ENCODE measurements at regions of chr18 and their contacts with region 1.

Region 1: DNA sequence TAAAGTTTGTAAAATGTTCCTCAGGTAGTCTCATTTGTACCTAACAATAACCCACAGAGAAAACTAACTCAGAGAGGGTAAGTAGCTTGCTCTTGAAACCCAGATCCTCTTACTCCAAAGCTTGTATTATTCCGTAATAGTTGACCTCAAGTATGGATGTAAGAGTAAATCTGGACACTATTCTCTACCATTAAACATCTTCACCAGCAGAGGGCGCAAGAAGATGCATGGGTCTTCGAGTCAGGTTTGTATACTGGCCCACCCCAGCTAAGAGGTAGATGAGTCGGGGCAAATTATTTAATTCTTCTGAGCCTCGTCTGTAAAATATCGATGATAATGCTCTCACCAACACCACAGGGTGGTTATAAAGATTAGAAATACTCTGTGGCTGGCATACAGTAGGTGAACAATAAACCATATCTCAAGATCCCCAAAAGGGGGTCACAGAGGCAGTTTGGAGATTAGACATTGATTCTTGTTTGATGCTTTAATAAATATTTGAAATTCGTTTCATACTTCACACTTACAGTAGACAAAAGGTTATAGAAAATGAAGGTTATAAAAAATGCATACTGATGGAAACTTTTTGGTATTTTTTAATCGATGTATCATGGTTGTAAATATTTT is 3.5 kb upstream of the CABLES1 start:
- DNase-seq: peak; percentile 85
- ATAC-seq: no peak
- H3K4me3 ChIP-seq: no peak overlapping the region
- H3K27ac ChIP-seq: no peak overlapping the region
- H3K4me1 ChIP-seq: peaks cover 20% of the 10 kb centered on the region
- H3K27me3 ChIP-seq: no peaks in the 10 kb centered on the region
- CTCF ChIP-seq: peak; percentile 91

Region 2: DNA sequence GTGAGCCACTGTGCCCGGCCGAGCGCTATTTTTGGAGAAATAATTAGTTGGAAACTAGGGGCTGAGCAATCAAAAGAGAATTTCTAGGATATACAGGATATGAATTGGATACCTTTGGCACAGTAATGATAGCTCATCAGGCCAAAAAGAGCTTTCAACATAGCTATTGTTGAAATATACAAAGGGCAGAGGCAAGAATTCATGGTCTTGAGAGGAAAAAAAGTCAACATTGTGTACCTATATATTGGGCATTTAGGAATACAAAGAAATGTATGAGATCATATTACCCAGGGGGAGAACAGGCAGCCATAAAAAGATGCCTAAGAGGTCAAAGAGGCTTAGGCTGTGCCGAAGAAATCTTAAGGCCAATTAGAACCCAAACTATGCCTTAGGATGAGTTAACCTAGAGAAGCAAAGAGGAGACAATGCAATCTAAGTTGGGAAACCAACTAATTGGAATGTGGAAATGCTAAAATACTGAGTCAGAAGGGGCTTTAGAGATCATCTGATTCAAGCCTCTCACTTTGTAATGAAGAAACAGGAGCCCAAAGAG is 99.7 kb before region 1 on chr18:
- CTCF ChIA-PET with region 1: interaction called, 3 read pairs
- POLR2A ChIA-PET with region 1: interaction called, 3 read pairs
- intact Hi-C with region 1: loop called (anchors 5 kb)
- DNase-seq: peak; percentile 52
- ATAC-seq: no peak; the same call in 1 of the 2 replicates
- H3K4me3 ChIP-seq: no peak overlapping the region
- H3K27ac ChIP-seq: peak overlapping the region; percentile 23
- H3K4me1 ChIP-seq: peaks cover 17% of the 10 kb centered on the region
- H3K27me3 ChIP-seq: no peaks in the 10 kb centered on the region
- CTCF ChIP-seq: no peak

Region 3: DNA sequence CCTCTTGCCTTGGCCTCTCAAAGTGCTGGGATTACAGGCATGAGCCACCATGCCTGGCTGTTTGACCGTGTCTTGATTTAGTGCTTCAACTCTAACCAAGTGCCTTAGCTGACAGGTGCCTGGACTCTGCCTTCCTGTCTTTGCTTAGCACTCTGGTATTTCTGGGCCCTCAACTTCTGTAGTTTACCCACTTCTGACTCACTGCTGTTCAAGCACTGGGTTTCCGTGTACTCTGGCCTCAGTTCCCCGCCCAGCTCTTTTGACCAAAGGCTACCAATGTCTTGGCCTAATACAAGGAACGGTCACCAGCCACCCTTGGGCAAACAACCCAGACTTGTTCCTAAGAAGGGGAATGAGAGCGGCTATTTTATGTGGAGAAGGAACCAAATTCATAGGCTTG is 32.2 kb before region 1 on chr18:
- CTCF ChIA-PET with region 1: interaction called, 3 read pairs
- POLR2A ChIA-PET with region 1: interaction called, 7 read pairs
- intact Hi-C with region 1: loop called (anchors 5 kb)
- DNase-seq: peak; percentile 94
- ATAC-seq: peak; percentile 93
- H3K4me3 ChIP-seq: no peak overlapping the region
- H3K27ac ChIP-seq: peak overlapping the region; percentile 99
- H3K4me1 ChIP-seq: peaks cover 56% of the 10 kb centered on the region
- H3K27me3 ChIP-seq: no peaks in the 10 kb centered on the region
- CTCF ChIP-seq: no peak

Region 4: DNA sequence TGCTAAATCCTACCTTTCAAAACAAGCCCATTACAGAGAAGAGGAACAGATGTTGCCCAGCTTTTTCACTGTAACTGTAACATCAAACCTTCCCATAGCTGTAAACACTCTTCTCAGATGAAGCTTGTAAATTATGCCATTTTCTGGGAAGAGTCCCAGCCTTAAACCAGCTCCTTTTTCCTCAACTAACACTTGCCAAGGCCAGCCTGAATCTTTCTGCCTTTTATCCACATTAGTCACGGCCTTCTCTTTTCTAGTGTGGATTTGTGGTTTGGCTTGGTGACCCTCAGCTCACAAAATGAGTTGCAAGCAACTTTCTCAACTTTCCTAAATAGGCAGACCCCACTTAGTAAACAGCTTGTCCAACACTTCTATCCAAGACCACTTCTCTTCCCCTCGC is 93.7 kb after region 1 on chr18:
- CTCF ChIA-PET with region 1: no interaction called
- POLR2A ChIA-PET with region 1: interaction called, 23 read pairs
- intact Hi-C with region 1: no loop called
- DNase-seq: peak; percentile 82
- ATAC-seq: peak; percentile 78
- H3K4me3 ChIP-seq: no peak overlapping the region
- H3K27ac ChIP-seq: peak overlapping the region; percentile 78
- H3K4me1 ChIP-seq: peaks cover 40% of the 10 kb centered on the region
- H3K27me3 ChIP-seq: no peaks in the 10 kb centered on the region
- CTCF ChIP-seq: no peak

Region 5: GRCh38 chr18:23283916-23284430 is 152.2 kb after region 1 on chr18:
- CTCF ChIA-PET with region 1: no interaction called
- POLR2A ChIA-PET with region 1: no interaction called
- intact Hi-C with region 1: loop called (anchors 5 kb)
- DNase-seq: peak; percentile 92
- ATAC-seq: peak; percentile 68
- H3K4me3 ChIP-seq: no peak overlapping the region; the same call in 1 of the 2 replicates
- H3K27ac ChIP-seq: peak overlapping the region; percentile 93
- H3K4me1 ChIP-seq: peaks cover 49% of the 10 kb centered on the region
- H3K27me3 ChIP-seq: no peaks in the 10 kb centered on the region
- CTCF ChIP-seq: no peak

Region 6: GRCh38 chr18:23412351-23412964 is 280.7 kb after region 1 on chr18:
- CTCF ChIA-PET with region 1: interaction called, 8 read pairs
- POLR2A ChIA-PET with region 1: no interaction called
- intact Hi-C with region 1: loop called (anchors 2 kb)
- DNase-seq: no peak
- ATAC-seq: no peak
- H3K4me3 ChIP-seq: no peak overlapping the region
- H3K27ac ChIP-seq: no peak overlapping the region
- H3K4me1 ChIP-seq: no peaks in the 10 kb centered on the region
- H3K27me3 ChIP-seq: no peaks in the 10 kb centered on the region
- CTCF ChIP-seq: no peak

Measured in PC-3 (cell line).